PC-9 (cell line): ENCODE measurements at regions of chr2 and their contacts with region 1.

Region 1: GRCh38 chr2:119759451-119760236 is at the start of gene PTPN4:
- DNase-seq: peak; percentile 99
- H3K4me3 ChIP-seq: peak within 1 kb of the TSS; percentile 91
- H3K27ac ChIP-seq: peak within 1 kb of the TSS; percentile 86
- H3K4me1 ChIP-seq: peaks cover 39% of the 10 kb centered on the region
- H3K27me3 ChIP-seq: no peaks in the 10 kb centered on the region
- CTCF ChIP-seq: no peak
- total RNA-seq, gene PTPN4: 46.6 and 60.7 TPM in 2 replicates

Region 2: GRCh38 chr2:119491808-119492533 is 267.7 kb before region 1 on chr2:
- CTCF ChIA-PET with region 1: no interaction called
- POLR2A ChIA-PET with region 1: no interaction called
- intact Hi-C with region 1: loop called (anchors 1 kb)
- DNase-seq: peak; percentile 77 to 97
- H3K4me3 ChIP-seq: no peak overlapping the region
- H3K27ac ChIP-seq: peak overlapping the region; percentile 83
- H3K4me1 ChIP-seq: peaks cover 34% of the 10 kb centered on the region
- H3K27me3 ChIP-seq: no peaks in the 10 kb centered on the region
- CTCF ChIP-seq: no peak; the same call in 1 of the 2 replicates

Region 3: GRCh38 chr2:119724656-119725485 is 34.8 kb before region 1 on chr2:
- CTCF ChIA-PET with region 1: no interaction called
- POLR2A ChIA-PET with region 1: no interaction called
- intact Hi-C with region 1: no loop called
- DNase-seq: no peak
- H3K4me3 ChIP-seq: no peak overlapping the region
- H3K27ac ChIP-seq: no peak overlapping the region
- H3K4me1 ChIP-seq: no peaks in the 10 kb centered on the region
- H3K27me3 ChIP-seq: no peaks in the 10 kb centered on the region; the same call in 1 of the 2 replicates
- CTCF ChIP-seq: no peak

Region 4: DNA sequence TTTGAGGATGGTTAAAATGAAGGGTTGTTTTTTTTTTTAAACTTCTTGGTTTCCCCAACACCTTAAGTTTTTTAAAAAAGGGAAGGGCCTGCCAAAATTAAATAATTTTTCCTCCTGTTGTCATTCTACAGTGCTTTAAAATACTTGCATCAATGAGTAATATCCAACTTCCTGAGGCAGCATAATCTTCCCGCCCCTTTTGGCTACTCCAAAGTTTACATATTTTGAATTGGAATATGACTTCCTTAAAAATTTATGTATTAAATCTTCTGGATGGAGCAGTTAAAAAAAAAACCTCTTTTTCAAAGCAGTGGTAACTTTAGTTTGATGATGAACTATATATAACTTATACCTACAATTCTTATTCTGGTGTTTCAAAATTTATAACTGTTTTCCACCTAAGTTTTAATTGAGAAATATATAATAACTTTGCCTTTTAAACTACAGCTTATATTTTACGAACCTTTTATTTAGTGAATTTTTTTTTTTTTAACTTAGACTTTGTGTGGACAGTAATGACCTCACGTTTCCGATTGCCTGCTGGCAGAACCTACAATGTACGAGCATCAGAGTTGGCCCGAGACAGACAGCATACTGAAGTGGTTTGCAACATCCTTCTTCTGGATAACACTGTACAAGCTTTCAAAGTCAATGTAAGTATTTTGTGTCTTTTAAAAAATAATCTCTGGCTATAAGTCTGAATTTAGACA is 49.9 kb after region 1 on chr2:
- CTCF ChIA-PET with region 1: no interaction called
- POLR2A ChIA-PET with region 1: no interaction called
- intact Hi-C with region 1: loop called (anchors 5 kb)
- DNase-seq: no peak
- H3K4me3 ChIP-seq: no peak overlapping the region
- H3K27ac ChIP-seq: peak overlapping the region; percentile 58
- H3K4me1 ChIP-seq: peaks cover 16% of the 10 kb centered on the region
- H3K27me3 ChIP-seq: no peaks in the 10 kb centered on the region
- CTCF ChIP-seq: no peak

Region 5: DNA sequence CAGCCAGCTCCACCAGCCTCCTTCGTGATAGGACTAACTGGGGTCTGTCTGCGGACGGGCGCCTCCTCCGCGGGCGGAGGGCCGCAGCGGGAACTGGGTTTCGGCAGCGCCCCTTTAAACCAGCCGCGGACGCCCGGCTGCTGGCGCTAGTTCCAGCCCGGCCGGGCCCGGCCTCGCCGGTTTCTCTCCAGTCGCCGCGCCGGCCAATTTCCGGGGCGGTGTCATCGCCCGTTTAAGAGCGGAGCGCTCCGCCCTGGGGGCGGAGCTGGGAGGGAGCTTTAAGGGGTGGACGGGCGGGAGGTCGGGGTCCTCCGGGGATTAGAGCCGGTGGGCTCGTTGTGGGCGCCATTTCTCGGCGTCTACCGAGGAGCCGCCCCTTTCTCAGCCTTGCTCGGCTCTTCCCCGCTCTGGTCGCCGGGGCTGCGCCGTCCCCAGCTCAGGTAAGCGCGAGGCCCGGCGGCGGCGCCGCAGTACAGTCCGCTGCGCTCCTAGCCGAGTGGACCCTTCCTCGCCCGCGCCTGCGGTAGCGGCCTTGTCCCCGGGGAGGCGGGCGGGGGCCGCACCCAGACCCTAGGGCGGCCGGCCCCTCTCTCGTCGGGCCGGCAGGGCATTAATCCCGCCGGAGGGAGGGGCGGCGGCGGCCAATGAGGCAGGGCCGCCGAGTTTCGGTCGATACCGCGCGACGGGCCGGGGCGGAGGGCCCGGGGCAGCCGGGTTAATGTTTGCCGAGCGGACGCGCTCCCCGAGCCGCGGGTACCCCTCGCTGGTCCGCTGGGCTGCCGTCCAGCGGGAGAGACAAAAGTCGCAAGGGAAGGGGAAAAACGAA is 253.3 kb after region 1 on chr2 and contains the start of gene EPB41L5:
- CTCF ChIA-PET with region 1: interaction called, 3 read pairs
- POLR2A ChIA-PET with region 1: no interaction called
- intact Hi-C with region 1: loop called (anchors 1 kb)
- DNase-seq: peak; percentile 88 to 95
- H3K4me3 ChIP-seq: peak within 1 kb of the TSS; percentile 82
- H3K27ac ChIP-seq: peak within 1 kb of the TSS; percentile 88
- H3K4me1 ChIP-seq: peaks cover 24% of the 10 kb centered on the region
- H3K27me3 ChIP-seq: no peaks in the 10 kb centered on the region
- CTCF ChIP-seq: no peak
- total RNA-seq, gene EPB41L5: 18.4 and 21.6 TPM in 2 replicates

Region 6: DNA sequence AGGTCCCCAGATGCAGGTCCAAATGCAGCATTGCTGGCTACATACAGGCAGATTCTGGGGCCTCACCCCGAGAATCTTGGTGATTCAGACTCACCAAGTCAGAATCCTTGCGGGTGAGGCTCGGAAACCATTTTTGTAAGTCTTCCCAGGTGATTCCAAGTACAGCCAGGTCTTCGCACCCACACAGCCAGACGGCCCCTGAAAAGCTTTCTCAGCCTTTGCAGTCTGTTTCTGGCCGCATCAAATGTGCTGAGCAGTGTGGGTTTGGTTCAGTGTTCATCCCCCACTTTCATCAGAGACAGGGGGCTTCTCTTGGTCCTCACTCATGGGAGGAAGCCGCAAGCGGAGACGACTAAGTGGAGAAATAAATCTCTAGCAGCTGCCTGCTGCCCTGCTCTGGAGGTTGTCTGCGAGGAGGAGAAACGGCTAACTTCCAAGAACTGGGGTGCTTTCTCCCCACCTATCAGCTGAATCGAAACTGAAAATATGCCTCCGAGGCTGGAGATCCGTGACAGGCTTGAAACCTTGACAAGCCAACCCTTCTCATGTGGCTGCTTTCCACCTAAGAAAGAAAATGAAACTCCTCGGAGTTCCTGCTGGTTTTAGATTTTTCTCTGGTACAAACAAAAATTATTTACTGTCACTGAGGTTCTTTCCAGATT is 472.5 kb after region 1 on chr2:
- CTCF ChIA-PET with region 1: no interaction called
- POLR2A ChIA-PET with region 1: no interaction called
- intact Hi-C with region 1: loop called (anchors 10 kb)
- DNase-seq: peak in 1 of 2 experiments; percentile 29
- H3K4me3 ChIP-seq: no peak overlapping the region
- H3K27ac ChIP-seq: no peak overlapping the region
- H3K4me1 ChIP-seq: peaks cover 35% of the 10 kb centered on the region
- H3K27me3 ChIP-seq: no peaks in the 10 kb centered on the region
- CTCF ChIP-seq: no peak

Region 7: GRCh38 chr2:120272763-120273481 is 513.3 kb after region 1 on chr2:
- CTCF ChIA-PET with region 1: no interaction called
- POLR2A ChIA-PET with region 1: no interaction called
- intact Hi-C with region 1: no loop called
- DNase-seq: no peak
- H3K4me3 ChIP-seq: no peak overlapping the region
- H3K27ac ChIP-seq: no peak overlapping the region
- H3K4me1 ChIP-seq: no peaks in the 10 kb centered on the region
- H3K27me3 ChIP-seq: no peaks in the 10 kb centered on the region
- CTCF ChIP-seq: no peak